ENCODE measurements at regions of chr1 and their contacts with region 1.

Region 1: GRCh38 chr1:15559294-15559761 is 25.5 kb downstream of the AGMAT start:
- DNase-seq: no peak
- ATAC-seq: no peak
- H3K4me3 ChIP-seq: no peak overlapping the region
- H3K4me3 Mint-ChIP-seq: no peak overlapping the region
- H3K27ac ChIP-seq: no peak overlapping the region
- H3K27ac Mint-ChIP-seq: no peak overlapping the region
- H3K4me1 ChIP-seq: peaks cover 14 to 19% of the 10 kb centered on the region in 2 donors
- H3K4me1 Mint-ChIP-seq: peaks cover 9% of the 10 kb centered on the region
- H3K27me3 ChIP-seq: no peaks in the 10 kb centered on the region
- H3K27me3 Mint-ChIP-seq: no peaks in the 10 kb centered on the region
- CTCF ChIP-seq: no peak

Region 2: DNA sequence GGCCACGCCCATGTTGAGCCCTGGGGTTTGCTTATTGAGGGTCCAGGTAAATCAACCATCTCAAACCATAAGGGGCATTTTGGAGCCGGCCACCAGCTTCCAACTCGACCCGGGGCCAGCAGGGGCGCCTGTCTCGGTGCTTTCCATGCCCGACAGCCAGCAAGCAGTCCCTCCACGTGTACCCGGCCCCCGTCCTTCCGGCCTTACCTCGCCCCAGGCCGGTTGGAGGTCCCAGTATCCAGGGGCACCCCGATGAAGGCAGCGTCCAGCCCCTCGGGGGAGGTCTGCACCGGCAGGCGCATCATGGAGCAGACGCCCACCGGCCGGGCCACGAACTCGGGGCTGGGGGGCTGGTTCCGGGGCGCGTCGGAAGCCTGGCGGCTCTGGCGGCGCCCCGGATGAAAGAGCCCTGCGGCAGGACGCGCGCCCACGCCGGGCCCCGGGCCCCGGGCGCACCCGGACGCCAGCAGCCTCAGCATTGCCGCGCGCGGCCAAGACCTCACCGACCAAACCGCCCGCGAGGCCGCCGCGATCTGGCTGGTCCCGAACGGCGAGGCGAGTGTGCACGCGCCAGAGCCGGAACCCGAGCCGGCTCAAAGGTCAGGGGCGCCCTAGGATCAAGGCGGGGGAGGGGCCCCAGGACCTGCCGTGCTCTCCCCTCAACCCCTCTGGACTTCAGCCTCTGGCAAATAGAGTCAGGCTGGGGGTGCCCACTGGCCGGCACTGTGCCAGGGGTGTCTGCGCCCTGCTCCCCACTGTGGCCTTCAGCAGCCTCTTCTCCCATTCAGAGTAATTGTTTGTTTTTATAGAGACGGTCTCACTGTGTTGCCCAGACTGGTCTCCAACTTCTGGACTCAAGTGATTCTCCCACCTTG is 25.4 kb after region 1 on chr1 and contains the start of gene AGMAT:
- CTCF ChIA-PET with region 1: interaction called, 5 read pairs
- POLR2A ChIA-PET with region 1: interaction called, 4 read pairs
- intact Hi-C with region 1: loop called (anchors 2 kb)
- DNase-seq: peak; percentile 74
- ATAC-seq: peak; percentile 86
- H3K4me3 ChIP-seq: peak within 1 kb of the TSS in 4 of 5 experiments; percentile 68 to 88 (median 76)
- H3K4me3 Mint-ChIP-seq: peak within 1 kb of the TSS; percentile 87
- H3K27ac ChIP-seq: peak within 1 kb of the TSS; percentile 58 to 78
- H3K27ac Mint-ChIP-seq: peak within 1 kb of the TSS; percentile 84
- H3K4me1 ChIP-seq: peaks cover 14 to 31% of the 10 kb centered on the region in 2 donors
- H3K4me1 Mint-ChIP-seq: peaks cover 21% of the 10 kb centered on the region
- H3K27me3 ChIP-seq: no peaks in the 10 kb centered on the region
- H3K27me3 Mint-ChIP-seq: no peaks in the 10 kb centered on the region
- CTCF ChIP-seq: peak; percentile 54
- total RNA-seq, gene AGMAT: 3.3 and 3.5 TPM in 2 replicates

Measured in B cell (primary cell).